ENCODE measurements at regions of chr11 and their contacts with region 1.

Region 1: DNA sequence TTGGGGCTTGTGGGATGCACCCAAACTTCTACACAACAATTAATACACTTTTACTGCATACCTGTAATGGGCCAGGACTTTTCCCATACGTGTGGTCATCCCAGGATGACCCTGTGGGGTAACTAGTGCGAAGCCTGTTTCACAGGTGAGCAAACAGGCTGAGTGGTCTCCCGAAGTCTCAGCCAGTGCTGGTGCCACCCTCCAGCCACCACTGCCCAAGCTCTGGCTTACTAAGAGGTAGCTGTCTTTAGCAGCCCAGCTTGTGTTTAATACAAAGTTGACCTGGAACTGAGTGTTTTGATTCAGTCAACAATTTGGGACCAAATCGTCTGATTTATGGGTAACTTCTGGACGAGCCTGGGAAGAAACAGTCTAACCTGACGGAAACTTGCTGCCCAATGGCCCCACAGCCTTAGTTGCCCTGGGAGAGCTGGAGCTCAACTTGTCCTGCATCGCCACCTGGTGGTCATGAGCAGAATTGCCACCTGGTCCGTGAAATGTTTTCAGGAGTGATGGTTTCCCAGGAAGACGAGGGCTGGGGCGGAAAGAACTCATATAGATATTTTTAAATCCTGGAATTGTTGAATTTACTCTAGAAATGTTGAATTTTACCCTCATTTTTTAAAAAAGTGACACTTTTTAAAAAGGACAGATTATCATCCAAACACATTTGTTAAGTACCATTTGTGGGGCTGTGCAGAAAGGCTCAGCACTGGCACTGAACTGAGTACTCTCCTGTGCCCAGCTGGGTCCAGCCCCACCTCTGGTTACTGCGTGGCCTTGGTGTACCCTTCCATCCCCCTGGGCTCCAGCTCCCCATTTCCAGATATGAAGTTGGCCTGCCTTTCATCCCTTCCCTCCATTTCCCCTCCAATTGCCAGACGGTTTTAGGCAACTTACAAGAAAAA is 95.5 kb upstream of the PARVA start:
- DNase-seq: peak; percentile 86
- H3K4me3 Mint-ChIP-seq: no peak overlapping the region
- H3K27ac Mint-ChIP-seq: no peak overlapping the region
- H3K4me1 Mint-ChIP-seq: peaks cover 7% of the 10 kb centered on the region
- H3K27me3 Mint-ChIP-seq: no peaks in the 10 kb centered on the region

Region 2: DNA sequence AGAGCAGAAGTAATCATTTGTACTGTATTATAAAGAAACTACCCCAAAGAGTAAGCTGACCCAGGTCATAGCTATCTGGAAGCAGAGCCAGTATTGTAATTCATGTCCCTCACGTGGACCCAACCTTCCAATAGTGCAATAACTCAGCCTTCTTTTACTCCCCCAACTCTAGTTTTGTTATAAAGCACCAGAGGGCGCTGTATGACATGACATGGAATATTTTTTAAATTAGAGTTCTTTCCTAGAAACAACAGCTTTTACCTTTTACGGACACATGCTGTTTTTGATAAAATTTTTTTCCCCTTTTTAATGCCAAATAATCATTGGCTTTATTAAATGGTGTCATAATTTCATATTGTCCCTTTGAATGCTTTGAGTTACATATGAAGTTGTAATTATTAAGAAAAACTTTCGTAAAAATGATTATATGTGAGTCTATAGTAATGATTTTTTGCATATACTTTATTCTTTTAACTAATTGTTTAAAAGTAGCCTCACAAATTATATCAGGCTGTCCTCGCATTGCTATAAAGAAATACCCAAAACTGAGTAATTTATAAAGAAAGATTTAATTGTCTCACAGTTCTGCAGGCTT is 350.3 kb before region 1 on chr11:
- CTCF ChIA-PET with region 1: interaction called, 10 read pairs
- POLR2A ChIA-PET with region 1: no interaction called
- intact Hi-C with region 1: no loop called
- DNase-seq: no peak
- H3K4me3 Mint-ChIP-seq: no peak overlapping the region
- H3K27ac Mint-ChIP-seq: no peak overlapping the region
- H3K4me1 Mint-ChIP-seq: no peaks in the 10 kb centered on the region
- H3K27me3 Mint-ChIP-seq: no peaks in the 10 kb centered on the region

Region 3: GRCh38 chr11:12070446-12071267 is 211.2 kb before region 1 on chr11:
- CTCF ChIA-PET with region 1: interaction called, 10 read pairs
- POLR2A ChIA-PET with region 1: no interaction called
- intact Hi-C with region 1: no loop called
- DNase-seq: peak; percentile 4
- H3K4me3 Mint-ChIP-seq: no peak overlapping the region
- H3K27ac Mint-ChIP-seq: no peak overlapping the region
- H3K4me1 Mint-ChIP-seq: peaks cover 6% of the 10 kb centered on the region
- H3K27me3 Mint-ChIP-seq: peaks cover 1% of the 10 kb centered on the region

Region 4: GRCh38 chr11:12207384-12208150 is 74.3 kb before region 1 on chr11:
- CTCF ChIA-PET with region 1: interaction called, 10 read pairs
- POLR2A ChIA-PET with region 1: no interaction called
- intact Hi-C with region 1: no loop called
- DNase-seq: peak; percentile 84
- H3K4me3 Mint-ChIP-seq: peak overlapping the region; percentile 14
- H3K27ac Mint-ChIP-seq: peak overlapping the region; percentile 87
- H3K4me1 Mint-ChIP-seq: peaks cover 69% of the 10 kb centered on the region
- H3K27me3 Mint-ChIP-seq: no peaks in the 10 kb centered on the region